T-cell (primary cell): ENCODE measurements at regions of chr7 and their contacts with region 1.

Region 1: DNA sequence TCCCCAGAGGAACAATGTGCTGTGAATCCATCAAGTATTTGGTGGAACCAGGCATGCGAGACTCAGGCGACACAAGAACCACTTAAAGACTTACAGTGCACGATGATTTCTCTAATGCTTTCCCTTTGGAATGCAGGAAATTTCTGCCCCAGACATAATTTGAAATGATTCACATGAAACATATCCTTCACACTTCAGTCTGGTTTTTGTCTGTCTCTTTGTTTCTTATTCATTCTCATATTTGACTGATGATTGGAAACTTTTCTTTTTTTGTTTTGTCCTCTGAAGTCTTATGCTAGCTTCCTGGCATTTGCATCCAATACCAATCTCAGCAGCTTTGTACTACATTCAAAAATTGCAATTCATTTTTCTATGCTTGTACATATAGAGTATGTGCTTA is 502.8 kb downstream of the PHTF2 start:
- DNase-seq: no peak
- ATAC-seq: no peak
- H3K4me3 ChIP-seq: no peak overlapping the region
- H3K4me3 Mint-ChIP-seq: no peak overlapping the region
- H3K27ac ChIP-seq: no peak overlapping the region
- H3K27ac Mint-ChIP-seq: no peak overlapping the region
- H3K4me1 ChIP-seq: no peaks in the 10 kb centered on the region
- H3K4me1 Mint-ChIP-seq: no peaks in the 10 kb centered on the region
- H3K27me3 ChIP-seq: no peaks in the 10 kb centered on the region
- H3K27me3 Mint-ChIP-seq: no peaks in the 10 kb centered on the region

Region 2: DNA sequence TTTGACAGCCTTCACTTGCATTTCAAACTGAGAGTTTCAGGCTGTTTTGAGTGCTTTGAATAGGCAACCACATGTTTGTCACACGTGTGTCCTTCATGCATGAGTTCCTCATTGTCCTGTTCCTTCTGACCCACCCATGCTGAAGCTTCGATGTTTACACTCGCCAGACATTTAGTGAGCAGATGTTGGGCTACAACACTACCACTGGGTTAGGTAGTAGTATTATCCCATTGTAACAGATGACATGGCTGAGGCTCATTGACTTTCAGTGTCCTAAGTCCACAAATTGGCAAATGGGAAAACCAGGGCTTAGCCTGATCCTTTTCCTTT is 46.7 kb before region 1 on chr7:
- CTCF ChIA-PET with region 1: no interaction called
- POLR2A ChIA-PET with region 1: interaction called in 1 of 2 experiments, 12 read pairs
- DNase-seq: no peak
- ATAC-seq: no peak
- H3K4me3 ChIP-seq: no peak overlapping the region
- H3K4me3 Mint-ChIP-seq: no peak overlapping the region
- H3K27ac ChIP-seq: no peak overlapping the region
- H3K27ac Mint-ChIP-seq: no peak overlapping the region
- H3K4me1 ChIP-seq: no peaks in the 10 kb centered on the region
- H3K4me1 Mint-ChIP-seq: no peaks in the 10 kb centered on the region
- H3K27me3 ChIP-seq: no peaks in the 10 kb centered on the region
- H3K27me3 Mint-ChIP-seq: no peaks in the 10 kb centered on the region

Region 3: GRCh38 chr7:78345979-78346378 is 44.6 kb after region 1 on chr7:
- CTCF ChIA-PET with region 1: no interaction called
- POLR2A ChIA-PET with region 1: no interaction called
- DNase-seq: no peak
- ATAC-seq: no peak
- H3K4me3 ChIP-seq: no peak overlapping the region
- H3K4me3 Mint-ChIP-seq: no peak overlapping the region
- H3K27ac ChIP-seq: no peak overlapping the region
- H3K27ac Mint-ChIP-seq: no peak overlapping the region
- H3K4me1 ChIP-seq: no peaks in the 10 kb centered on the region
- H3K4me1 Mint-ChIP-seq: no peaks in the 10 kb centered on the region
- H3K27me3 ChIP-seq: no peaks in the 10 kb centered on the region
- H3K27me3 Mint-ChIP-seq: no peaks in the 10 kb centered on the region

Region 4: DNA sequence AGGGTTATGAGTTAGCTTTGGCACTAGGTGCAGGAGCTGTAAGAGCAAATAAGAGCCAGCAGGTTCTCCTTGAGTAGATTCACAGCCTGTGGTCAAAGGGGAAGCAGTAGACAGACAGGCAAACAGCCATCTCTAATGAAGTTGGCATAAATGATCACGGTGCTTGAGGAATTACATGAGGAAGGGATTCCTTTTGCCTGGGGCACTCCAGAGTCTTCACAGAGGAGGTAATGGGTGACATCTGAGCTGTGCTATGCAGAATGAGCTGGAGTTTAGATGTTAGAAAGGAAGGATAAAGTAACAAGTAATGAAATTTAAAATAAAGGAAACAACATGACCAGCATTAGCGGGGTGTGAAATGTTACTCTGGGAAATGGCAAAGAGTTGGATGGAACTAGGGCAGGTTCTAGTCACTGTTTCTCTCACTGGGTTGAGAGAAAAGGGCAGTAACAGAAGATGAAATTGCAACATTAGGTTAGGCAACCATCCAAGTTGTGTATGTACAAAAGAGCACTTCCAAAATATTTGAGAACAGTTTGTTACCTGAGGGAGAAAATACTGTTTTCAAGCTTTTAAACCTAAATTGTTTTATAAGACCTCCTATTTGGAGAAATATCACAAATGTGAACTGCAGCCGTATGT is 110.9 kb after region 1 on chr7:
- CTCF ChIA-PET with region 1: interaction called in 1 of 2 experiments, 10 read pairs
- POLR2A ChIA-PET with region 1: no interaction called
- DNase-seq: no peak
- ATAC-seq: no peak
- H3K4me3 ChIP-seq: no peak overlapping the region
- H3K4me3 Mint-ChIP-seq: no peak overlapping the region
- H3K27ac ChIP-seq: no peak overlapping the region
- H3K27ac Mint-ChIP-seq: no peak overlapping the region
- H3K4me1 ChIP-seq: no peaks in the 10 kb centered on the region
- H3K4me1 Mint-ChIP-seq: no peaks in the 10 kb centered on the region
- H3K27me3 ChIP-seq: no peaks in the 10 kb centered on the region
- H3K27me3 Mint-ChIP-seq: peaks cover 0 to 4% of the 10 kb centered on the region in 2 donors